ENCODE measurements at regions of chr1 and their contacts with region 1.

Region 1: DNA sequence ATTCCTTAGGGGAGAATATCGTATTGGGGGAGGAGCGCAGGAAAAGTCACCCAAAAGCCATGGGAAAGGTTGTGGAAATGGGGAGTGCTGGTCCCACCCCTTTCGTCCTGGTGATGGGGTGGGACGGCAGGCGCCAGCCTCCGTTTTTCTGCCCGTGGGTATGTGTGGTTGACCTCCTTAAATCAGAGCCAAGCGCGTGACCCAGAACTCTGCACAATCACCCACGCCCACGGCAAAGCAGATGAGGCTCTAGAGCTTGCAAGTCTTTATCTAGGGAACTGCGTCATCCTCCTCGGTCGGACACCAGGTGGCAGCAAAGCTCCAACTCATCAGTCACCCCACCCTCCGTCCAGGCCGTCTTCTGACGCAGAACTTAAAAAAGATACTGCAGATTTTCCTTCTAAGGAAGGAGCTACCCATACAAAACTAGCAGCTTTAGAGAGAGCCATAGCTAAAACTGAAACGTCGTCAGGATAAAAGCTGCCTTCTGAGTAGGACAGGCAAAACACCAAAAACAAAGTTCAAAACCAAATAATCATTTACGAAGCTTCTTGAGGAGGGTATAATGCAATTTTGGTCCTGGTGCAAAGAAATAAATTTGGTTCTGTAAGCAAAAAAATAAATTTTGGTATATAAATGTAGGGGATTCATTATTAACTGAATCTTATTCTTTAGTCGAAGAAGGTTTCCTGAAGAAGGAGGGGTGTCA is 62.0 kb downstream of the TBX19 start:
- DNase-seq: peak; percentile 89
- H3K4me3 Mint-ChIP-seq: no peak overlapping the region
- H3K27ac Mint-ChIP-seq: peak overlapping the region; percentile 72
- H3K4me1 Mint-ChIP-seq: peaks cover 55% of the 10 kb centered on the region
- H3K27me3 Mint-ChIP-seq: no peaks in the 10 kb centered on the region

Region 2: GRCh38 chr1:168234846-168235547 is 107.7 kb before region 1 on chr1:
- CTCF ChIA-PET with region 1: interaction called, 14 read pairs
- POLR2A ChIA-PET with region 1: no interaction called
- DNase-seq: peak; percentile 60
- H3K4me3 Mint-ChIP-seq: no peak overlapping the region
- H3K27ac Mint-ChIP-seq: peak overlapping the region; percentile 10
- H3K4me1 Mint-ChIP-seq: peaks cover 56% of the 10 kb centered on the region
- H3K27me3 Mint-ChIP-seq: no peaks in the 10 kb centered on the region

Region 3: DNA sequence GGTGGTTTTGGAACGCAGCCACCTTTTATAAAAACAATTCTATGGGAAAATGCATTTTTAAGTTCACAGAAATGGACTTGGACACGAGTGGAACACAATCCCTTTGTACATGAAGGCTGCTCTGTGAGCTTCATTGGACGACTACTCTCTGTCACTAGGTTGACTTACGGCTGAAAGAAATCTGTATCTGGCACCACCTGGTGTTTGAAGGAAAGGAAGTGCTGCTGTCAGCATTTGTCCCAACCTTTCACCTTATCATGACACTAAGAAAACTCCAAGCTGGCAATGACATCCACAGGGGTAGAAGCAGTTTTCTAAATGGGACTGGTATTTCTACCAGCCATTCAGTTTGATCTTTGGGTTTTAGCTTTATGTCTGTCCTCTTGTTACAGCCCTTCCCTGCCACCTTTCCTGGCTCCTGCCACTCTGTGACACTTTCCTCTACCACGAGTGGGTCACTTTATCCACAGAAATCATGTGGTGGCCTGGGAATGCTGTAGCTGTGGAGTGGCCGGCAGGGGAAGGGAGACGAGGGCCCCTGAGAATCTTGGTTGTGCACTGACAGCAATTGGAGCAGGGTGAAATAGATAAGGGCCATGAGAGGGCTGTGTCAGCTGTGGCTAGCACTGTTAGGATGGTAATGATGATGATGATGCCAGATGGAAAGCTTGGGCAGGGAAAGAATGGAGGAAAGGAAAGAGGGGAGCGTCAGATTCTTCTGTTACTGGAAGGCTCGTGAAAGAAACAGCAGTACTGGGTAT is 23.2 kb after region 1 on chr1:
- CTCF ChIA-PET with region 1: interaction called, 79 read pairs
- POLR2A ChIA-PET with region 1: interaction called, 3 read pairs
- DNase-seq: peak; percentile 20
- H3K4me3 Mint-ChIP-seq: no peak overlapping the region
- H3K27ac Mint-ChIP-seq: no peak overlapping the region
- H3K4me1 Mint-ChIP-seq: peaks cover 37% of the 10 kb centered on the region
- H3K27me3 Mint-ChIP-seq: peaks cover 9% of the 10 kb centered on the region

Region 4: GRCh38 chr1:168439456-168440375 is 97.0 kb after region 1 on chr1:
- CTCF ChIA-PET with region 1: interaction called, 44 read pairs
- POLR2A ChIA-PET with region 1: interaction called, 3 read pairs
- DNase-seq: peak; percentile 93
- H3K4me3 Mint-ChIP-seq: peak overlapping the region; percentile 52
- H3K27ac Mint-ChIP-seq: peak overlapping the region; percentile 68
- H3K4me1 Mint-ChIP-seq: peaks cover 62% of the 10 kb centered on the region
- H3K27me3 Mint-ChIP-seq: peaks cover 1% of the 10 kb centered on the region

Region 5: GRCh38 chr1:168535536-168535935 is 192.8 kb after region 1 on chr1:
- CTCF ChIA-PET with region 1: interaction called, 10 read pairs
- POLR2A ChIA-PET with region 1: no interaction called
- DNase-seq: peak; percentile 62
- H3K4me3 Mint-ChIP-seq: peak overlapping the region; percentile 59
- H3K27ac Mint-ChIP-seq: peak overlapping the region; percentile 91
- H3K4me1 Mint-ChIP-seq: peaks cover 68% of the 10 kb centered on the region
- H3K27me3 Mint-ChIP-seq: no peaks in the 10 kb centered on the region